RWPE1 (cell line): ENCODE measurements at regions of chr3 and their contacts with region 1.

Region 1: DNA sequence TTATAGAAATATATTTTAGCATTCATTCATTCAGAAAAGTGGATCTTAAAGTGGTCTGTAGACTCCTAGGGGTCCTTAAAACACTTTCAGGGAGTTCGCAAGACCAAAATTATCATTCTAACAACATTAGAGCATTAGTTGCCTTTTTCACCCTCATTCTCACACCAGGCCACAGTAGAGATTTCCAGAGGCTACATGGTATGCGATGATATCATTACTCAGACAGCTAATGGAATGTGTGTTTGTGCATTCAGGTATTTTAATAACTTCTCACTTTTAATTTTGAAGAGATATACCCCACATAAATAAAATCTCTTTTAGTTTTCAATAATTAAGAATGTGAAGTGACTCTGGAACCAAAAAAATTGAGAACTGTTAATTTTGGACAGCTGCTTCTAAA is 206.9 kb downstream of the NSUN3 start:
- DNase-seq: no peak
- H3K27ac ChIP-seq: no peak overlapping the region
- CTCF ChIP-seq: no peak

Region 2: DNA sequence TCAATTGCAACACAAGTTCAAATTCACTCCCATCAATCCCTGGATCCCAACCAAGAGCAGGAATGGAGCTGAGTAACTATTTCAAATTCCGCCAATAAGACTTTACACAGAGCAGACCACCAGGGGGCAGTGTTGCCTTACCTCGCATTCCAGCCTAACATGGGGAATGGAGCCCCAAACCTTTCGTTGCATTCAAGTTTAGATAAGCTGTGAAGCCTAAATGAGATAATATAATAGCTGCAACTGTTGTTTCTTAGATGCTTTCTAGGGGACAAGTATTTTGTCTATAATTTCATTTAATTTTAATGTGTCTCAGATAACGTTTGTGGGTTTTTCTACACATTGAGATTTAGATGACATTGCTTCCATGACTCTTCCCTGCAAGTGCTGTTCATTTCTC is 20.2 kb before region 1 on chr3:
- CTCF ChIA-PET with region 1: interaction called, 11 read pairs
- POLR2A ChIA-PET with region 1: no interaction called
- DNase-seq: peak; percentile 63
- H3K27ac ChIP-seq: no peak overlapping the region
- CTCF ChIP-seq: peak; percentile 81

Region 3: DNA sequence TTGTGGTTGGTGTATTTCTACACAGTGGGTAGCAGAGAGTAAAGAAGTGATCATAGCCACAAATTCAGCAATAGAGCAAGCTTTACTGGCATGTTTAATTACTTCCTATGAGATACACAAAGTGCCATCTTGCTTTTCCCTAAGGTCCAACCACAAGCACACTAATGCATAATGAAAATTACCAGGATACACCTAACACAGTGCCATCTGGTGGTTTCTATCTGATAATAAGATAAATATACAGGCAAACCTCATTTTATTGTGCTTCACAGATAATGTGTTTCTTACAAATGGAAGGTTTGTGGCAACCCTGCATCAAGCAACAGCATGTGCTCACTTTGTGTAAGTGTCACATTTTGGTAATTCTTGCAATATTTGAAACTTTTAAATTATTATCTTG is 16.1 kb after region 1 on chr3:
- CTCF ChIA-PET with region 1: no interaction called
- POLR2A ChIA-PET with region 1: no interaction called
- DNase-seq: peak; percentile 24
- H3K27ac ChIP-seq: no peak overlapping the region
- CTCF ChIP-seq: peak; percentile 21; the same call in 1 of the 2 replicates